Naive thymus-derived CD4-positive, alpha-beta T cell (primary cell): ENCODE measurements at regions of chr9 and their contacts with region 1.

Region 1: DNA sequence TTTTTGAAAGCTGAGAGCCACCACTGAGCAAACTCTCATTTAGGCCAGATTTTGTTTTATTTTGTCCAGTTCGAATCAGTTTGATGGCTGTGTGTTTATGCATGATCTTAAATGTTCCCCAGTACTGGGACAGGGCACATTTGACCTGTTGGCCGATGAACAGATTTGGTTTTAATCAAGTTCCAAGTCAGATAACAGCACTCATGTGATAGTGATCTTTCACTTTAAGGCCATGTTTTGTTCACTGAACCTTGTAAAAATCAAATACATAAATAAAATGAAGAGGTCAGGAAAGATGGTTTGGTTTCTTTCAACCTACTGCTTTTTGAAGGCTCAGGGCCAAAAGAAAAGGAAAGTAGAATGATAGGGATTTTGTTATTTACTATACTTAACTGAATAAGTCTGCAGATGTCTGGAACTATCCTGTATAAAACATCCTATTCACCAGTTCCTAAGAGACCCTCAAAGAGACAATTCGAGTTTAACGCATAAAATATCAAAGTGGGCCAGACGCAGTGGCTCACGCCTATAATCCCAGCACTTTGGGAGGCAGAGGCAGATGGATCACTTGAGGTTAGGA is 77.2 kb downstream of the PGM5 start:
- DNase-seq: no peak
- ATAC-seq: no peak
- H3K4me3 ChIP-seq: no peak overlapping the region
- H3K4me3 Mint-ChIP-seq: no peak overlapping the region
- H3K27ac ChIP-seq: no peak overlapping the region
- H3K27ac Mint-ChIP-seq: no peak overlapping the region
- H3K4me1 ChIP-seq: no peaks in the 10 kb centered on the region
- H3K4me1 Mint-ChIP-seq: peaks cover 0 to 2% (median 0%) of the 10 kb centered on the region in 7 donors
- H3K27me3 ChIP-seq: peaks cover 0 to 4% of the 10 kb centered on the region in 2 donors
- H3K27me3 Mint-ChIP-seq: peaks cover 6 to 36% (median 18%) of the 10 kb centered on the region in 5 donors

Region 2: DNA sequence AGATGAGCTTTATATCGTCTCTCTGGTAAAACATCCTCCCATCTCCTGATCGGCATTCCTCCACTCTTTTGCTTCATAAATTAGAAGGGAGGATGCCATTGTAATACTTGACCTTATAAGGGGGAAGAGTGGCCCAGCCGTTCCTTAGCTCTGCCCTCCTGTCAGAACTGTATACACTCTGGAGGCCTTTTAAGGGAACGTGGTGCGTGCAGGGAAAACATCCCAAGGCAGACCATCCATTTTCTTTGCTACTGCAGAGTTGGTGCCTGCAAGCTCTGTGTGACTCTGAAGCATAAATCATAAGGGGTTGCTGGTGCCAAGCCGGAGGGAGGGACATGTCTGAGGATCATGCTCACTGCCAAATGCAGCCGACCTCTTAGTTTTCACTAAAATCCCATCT is 13.2 kb after region 1 on chr9:
- CTCF ChIA-PET with region 1: no interaction called
- POLR2A ChIA-PET with region 1: no interaction called
- intact Hi-C with region 1: loop called in 1 of 2 experiments (anchors 2 kb)
- DNase-seq: no peak
- ATAC-seq: no peak
- H3K4me3 ChIP-seq: no peak overlapping the region
- H3K4me3 Mint-ChIP-seq: no peak overlapping the region
- H3K27ac ChIP-seq: no peak overlapping the region
- H3K27ac Mint-ChIP-seq: no peak overlapping the region
- H3K4me1 ChIP-seq: no peaks in the 10 kb centered on the region
- H3K4me1 Mint-ChIP-seq: no peaks in the 10 kb centered on the region
- H3K27me3 ChIP-seq: no peaks in the 10 kb centered on the region
- H3K27me3 Mint-ChIP-seq: peaks cover 0 to 11% (median 10%) of the 10 kb centered on the region in 5 donors

Region 3: GRCh38 chr9:68473790-68474189 is 40.2 kb after region 1 on chr9:
- CTCF ChIA-PET with region 1: no interaction called
- POLR2A ChIA-PET with region 1: no interaction called
- intact Hi-C with region 1: no loop called
- DNase-seq: no peak
- ATAC-seq: no peak
- H3K4me3 ChIP-seq: no peak overlapping the region
- H3K4me3 Mint-ChIP-seq: no peak overlapping the region
- H3K27ac ChIP-seq: no peak overlapping the region
- H3K27ac Mint-ChIP-seq: no peak overlapping the region
- H3K4me1 ChIP-seq: no peaks in the 10 kb centered on the region
- H3K4me1 Mint-ChIP-seq: no peaks in the 10 kb centered on the region
- H3K27me3 ChIP-seq: no peaks in the 10 kb centered on the region
- H3K27me3 Mint-ChIP-seq: peaks cover 12 to 31% (median 21%) of the 10 kb centered on the region in 5 donors